ENCODE measurements at regions of chr1 and their contacts with region 1.

Region 1: DNA sequence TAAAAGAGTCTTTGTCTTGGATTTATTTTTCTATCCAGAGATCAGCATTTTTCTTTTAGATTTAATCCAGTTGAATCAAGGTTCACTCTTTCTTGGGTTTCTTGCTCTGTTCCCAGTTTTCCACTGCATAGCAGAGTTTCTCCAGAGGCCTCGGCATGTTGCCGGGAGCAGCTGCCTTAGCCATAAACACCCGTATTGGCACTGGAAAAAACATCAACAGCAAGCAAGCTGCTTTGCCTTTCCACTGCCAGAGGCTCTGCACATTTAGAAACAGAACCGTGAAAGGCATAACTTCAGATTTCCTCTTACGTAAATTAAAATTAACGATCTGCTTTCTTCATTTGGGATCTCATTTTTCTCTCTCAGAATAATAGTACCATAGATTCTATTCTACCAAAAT is 181.8 kb upstream of the L1TD1 start:
- DNase-seq: no peak
- ATAC-seq: no peak
- H3K4me3 ChIP-seq: no peak overlapping the region
- H3K27ac ChIP-seq: no peak overlapping the region
- H3K4me1 ChIP-seq: no peaks in the 10 kb centered on the region
- H3K27me3 ChIP-seq: no peaks in the 10 kb centered on the region
- CTCF ChIP-seq: no peak
- EP300 ChIP-seq: no peak
- POLR2A ChIP-seq: no peak
- RAD21 ChIP-seq: no peak

Region 2: GRCh38 chr1:61993331-61993961 is 19.4 kb before region 1 on chr1:
- CTCF ChIA-PET with region 1: no interaction called
- POLR2A ChIA-PET with region 1: interaction called, 3 read pairs
- in situ Hi-C with region 1: no loop called
- intact Hi-C with region 1: loop called (anchors 2 kb)
- DNase-seq: no peak
- ATAC-seq: no peak
- H3K4me3 ChIP-seq: no peak overlapping the region
- H3K27ac ChIP-seq: no peak overlapping the region
- H3K4me1 ChIP-seq: no peaks in the 10 kb centered on the region
- H3K27me3 ChIP-seq: 0 out of 5 replicates have a peak, but pooled peaks cover 0 to 2% of the 10 kb centered on the region in 2 experiments
- CTCF ChIP-seq: no peak
- EP300 ChIP-seq: no peak
- POLR2A ChIP-seq: no peak
- RAD21 ChIP-seq: no peak

Region 3: GRCh38 chr1:62295921-62296491 is 283.2 kb after region 1 on chr1:
- CTCF ChIA-PET with region 1: no interaction called
- POLR2A ChIA-PET with region 1: no interaction called
- in situ Hi-C with region 1: no loop called
- intact Hi-C with region 1: no loop called
- DNase-seq: no peak
- ATAC-seq: no peak
- H3K4me3 ChIP-seq: no peak overlapping the region
- H3K27ac ChIP-seq: no peak overlapping the region
- H3K4me1 ChIP-seq: no peaks in the 10 kb centered on the region
- H3K27me3 ChIP-seq: peaks cover 8 to 31% of the 10 kb centered on the region in 2 experiments; a peak in 3 of 5 replicates
- CTCF ChIP-seq: no peak
- EP300 ChIP-seq: no peak
- POLR2A ChIP-seq: no peak
- RAD21 ChIP-seq: no peak

Region 4: DNA sequence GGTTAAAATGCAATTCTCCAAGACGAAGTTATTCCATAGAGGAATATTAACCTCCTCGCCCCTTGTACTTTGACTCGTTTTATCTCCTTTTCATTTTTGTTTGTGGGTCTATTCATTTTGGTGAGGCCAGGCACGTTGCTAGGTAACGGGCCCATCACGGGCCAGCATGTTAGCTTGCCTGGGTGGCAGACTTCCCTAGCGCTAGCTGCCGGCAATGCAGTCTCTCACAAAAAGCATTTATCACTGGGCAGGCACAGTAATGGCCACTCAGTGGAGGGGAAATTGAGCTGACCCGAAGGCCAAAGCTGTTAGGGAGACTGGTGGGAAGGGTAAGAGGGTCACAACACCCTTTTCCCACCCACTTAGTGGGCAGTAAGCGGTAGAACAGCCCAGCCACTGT is 1075.1 kb after region 1 on chr1:
- CTCF ChIA-PET with region 1: no interaction called
- POLR2A ChIA-PET with region 1: no interaction called
- in situ Hi-C with region 1: no loop called
- intact Hi-C with region 1: loop called (anchors 10 kb)
- DNase-seq: peak in 2 of 4 experiments; percentile 2 to 12
- ATAC-seq: peak; percentile 41; the same call in 1 of the 3 replicates
- H3K4me3 ChIP-seq: no peak overlapping the region
- H3K27ac ChIP-seq: no peak overlapping the region
- H3K4me1 ChIP-seq: no peaks in the 10 kb centered on the region
- H3K27me3 ChIP-seq: peaks cover 4 to 10% of the 10 kb centered on the region in 2 experiments; a peak in 4 of 5 replicates
- CTCF ChIP-seq: no peak
- EP300 ChIP-seq: no peak
- POLR2A ChIP-seq: no peak
- RAD21 ChIP-seq: no peak

Measured in K562 (cell line).